ENCODE measurements at regions of chr1 and their contacts with region 1.

Region 1: DNA sequence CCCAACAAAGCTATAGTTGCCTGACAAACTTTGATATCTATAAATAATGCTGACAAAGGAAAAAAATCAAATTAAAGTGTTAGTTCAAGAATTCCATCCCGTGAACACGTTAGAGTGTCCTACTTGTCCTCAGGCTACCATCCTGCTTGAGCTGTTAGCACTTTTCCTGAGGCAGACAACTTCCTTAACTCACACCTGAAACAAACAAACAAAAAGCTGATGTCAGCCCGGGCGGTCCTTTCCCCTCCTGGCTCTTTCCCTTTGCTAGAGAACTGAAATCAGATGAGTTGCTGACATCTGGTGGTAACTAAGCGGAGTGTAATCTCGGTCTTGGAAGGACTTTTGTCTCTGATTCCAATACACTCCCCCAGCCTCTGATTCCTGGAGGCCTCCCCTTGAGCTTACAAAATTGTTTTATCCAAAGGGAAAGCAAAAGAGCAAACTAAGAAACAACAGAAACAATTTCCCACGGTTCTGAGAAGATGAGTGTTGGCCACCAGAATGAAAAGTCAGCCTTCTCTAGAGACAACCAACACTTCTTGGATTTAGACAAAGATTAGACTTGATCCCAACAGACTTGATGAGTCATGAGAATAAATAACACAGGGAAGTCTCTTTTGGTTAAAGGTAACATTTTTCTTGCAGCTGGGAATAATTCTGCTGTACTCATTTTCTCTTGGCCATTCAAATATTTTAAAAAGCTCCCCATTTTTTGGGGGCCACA is 135.4 kb downstream of the PROX1 start:
- DNase-seq: peak; percentile 54
- H3K4me3 ChIP-seq: no peak overlapping the region
- H3K27ac ChIP-seq: no peak overlapping the region
- H3K4me1 ChIP-seq: no peaks in the 10 kb centered on the region
- H3K27me3 ChIP-seq: no peaks in the 10 kb centered on the region
- CTCF ChIP-seq: peak; percentile 56

Region 2: GRCh38 chr1:213135572-213135971 is 987.7 kb before region 1 on chr1:
- intact Hi-C with region 1: loop called (anchors 10 kb)
- DNase-seq: no peak
- H3K4me3 ChIP-seq: no peak overlapping the region
- H3K27ac ChIP-seq: peak overlapping the region; percentile 41
- H3K4me1 ChIP-seq: no peaks in the 10 kb centered on the region
- H3K27me3 ChIP-seq: no peaks in the 10 kb centered on the region
- CTCF ChIP-seq: no peak

Region 3: DNA sequence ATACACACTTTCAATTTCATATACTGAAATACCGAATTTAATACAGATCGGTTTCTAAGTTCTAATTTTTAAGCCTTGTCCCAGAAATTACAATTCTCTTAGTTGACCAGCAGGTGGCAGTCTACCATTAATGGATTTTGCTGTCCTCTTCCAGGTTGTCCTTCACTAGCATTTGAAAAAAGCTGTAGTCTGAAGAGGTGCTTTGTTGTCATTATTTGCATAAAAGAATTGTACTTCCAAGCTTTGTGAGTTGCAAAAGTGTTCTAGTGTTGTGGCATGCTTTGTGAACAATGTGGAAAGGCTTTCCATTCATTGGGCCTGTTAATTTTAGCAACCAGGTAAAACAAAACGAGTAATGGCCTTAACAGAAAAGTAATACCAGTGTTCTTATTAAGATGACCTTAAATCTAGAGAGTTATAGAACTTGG is 878.5 kb before region 1 on chr1:
- intact Hi-C with region 1: loop called (anchors 5 kb)
- DNase-seq: peak; percentile 22
- H3K4me3 ChIP-seq: no peak overlapping the region
- H3K27ac ChIP-seq: no peak overlapping the region
- H3K4me1 ChIP-seq: no peaks in the 10 kb centered on the region
- H3K27me3 ChIP-seq: no peaks in the 10 kb centered on the region
- CTCF ChIP-seq: peak; percentile 65

Region 4: GRCh38 chr1:213374369-213374768 is 748.9 kb before region 1 on chr1:
- intact Hi-C with region 1: loop called (anchors 2 kb)
- DNase-seq: peak; percentile 71
- H3K4me3 ChIP-seq: no peak overlapping the region
- H3K27ac ChIP-seq: no peak overlapping the region
- H3K4me1 ChIP-seq: no peaks in the 10 kb centered on the region
- H3K27me3 ChIP-seq: no peaks in the 10 kb centered on the region
- CTCF ChIP-seq: peak; percentile 84

Region 5: DNA sequence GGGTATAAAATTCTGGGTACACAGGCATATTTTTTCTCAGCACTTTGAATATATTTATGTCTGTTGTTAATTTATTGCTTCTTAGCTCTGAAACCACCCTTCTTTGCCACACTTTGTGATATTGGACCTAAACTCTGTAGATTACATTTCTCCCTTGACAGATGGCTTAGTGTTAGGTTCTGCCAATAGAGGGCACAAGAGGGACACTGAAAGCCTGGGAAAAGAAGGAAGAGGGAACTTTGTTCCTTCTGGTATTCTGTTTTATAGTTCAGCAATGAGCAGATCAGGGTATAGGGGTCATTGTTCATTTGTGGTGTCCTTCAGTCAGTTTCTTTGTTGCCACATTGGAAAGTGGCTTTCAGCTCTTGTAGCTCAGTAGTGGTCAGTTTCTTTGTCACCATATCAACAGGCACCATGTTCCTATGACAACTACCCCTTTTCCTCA is 559.0 kb before region 1 on chr1:
- intact Hi-C with region 1: loop called (anchors 5 kb)
- DNase-seq: peak; percentile 56
- H3K4me3 ChIP-seq: no peak overlapping the region
- H3K27ac ChIP-seq: no peak overlapping the region
- H3K4me1 ChIP-seq: no peaks in the 10 kb centered on the region
- H3K27me3 ChIP-seq: no peaks in the 10 kb centered on the region
- CTCF ChIP-seq: peak; percentile 46

Region 6: DNA sequence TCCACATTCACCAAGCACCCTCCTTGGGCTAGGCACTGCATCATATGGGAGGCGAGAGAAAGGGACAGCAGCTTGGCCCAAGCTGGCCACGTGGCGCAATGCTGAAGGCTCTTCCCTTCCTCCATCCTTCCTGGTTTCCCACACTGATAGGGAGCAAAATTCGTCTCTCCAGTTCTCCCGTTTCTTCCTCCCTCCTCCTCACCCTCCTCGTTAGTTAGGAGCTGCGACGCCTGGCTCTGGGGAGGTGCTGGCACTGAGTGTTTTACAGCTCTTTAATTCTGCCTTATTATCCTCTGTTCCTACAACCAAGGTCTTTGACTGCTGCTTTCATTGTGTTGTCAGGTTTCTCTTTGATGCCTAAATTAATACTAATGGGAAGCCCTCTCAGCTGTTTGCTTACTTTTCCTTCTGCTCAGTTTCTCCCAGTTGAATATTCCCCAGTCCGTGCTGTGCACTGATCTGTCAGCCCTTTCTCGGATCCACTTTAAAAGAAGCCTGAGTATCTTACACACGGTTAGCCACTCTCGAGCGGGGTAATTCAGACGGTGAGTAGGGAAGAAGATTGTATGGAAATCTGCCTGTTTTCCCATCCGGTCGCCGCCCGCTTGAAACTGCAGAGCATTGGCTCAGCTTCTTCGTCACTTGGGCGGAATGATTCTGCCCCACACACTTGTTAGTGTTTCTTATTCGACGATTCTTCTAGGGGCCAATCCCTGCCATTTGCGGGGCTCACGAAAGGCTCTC is 101.6 kb after region 1 on chr1:
- intact Hi-C with region 1: no loop called
- DNase-seq: no peak
- H3K4me3 ChIP-seq: peak overlapping the region; percentile 7
- H3K27ac ChIP-seq: no peak overlapping the region
- H3K4me1 ChIP-seq: no peaks in the 10 kb centered on the region
- H3K27me3 ChIP-seq: no peaks in the 10 kb centered on the region
- CTCF ChIP-seq: no peak

Region 7: DNA sequence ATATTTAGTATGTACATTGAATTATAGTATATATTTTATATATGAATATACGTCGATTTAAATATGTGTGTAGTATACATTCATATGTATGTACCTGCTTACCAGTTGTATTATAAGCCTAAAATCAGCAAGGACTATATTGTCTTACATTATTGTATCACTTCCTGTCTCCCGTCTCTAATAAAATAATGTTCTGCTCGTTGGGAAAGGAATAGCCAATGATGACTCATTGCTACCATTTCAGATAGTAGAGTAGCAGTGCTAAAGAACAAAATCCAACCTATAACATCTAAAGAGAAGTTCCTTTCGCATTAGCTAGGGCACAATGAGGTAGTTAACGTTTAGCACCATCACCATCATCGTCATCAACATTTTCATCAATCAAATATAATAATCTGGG is 117.8 kb after region 1 on chr1:
- intact Hi-C with region 1: no loop called
- DNase-seq: no peak
- H3K4me3 ChIP-seq: no peak overlapping the region
- H3K27ac ChIP-seq: no peak overlapping the region
- H3K4me1 ChIP-seq: no peaks in the 10 kb centered on the region
- H3K27me3 ChIP-seq: no peaks in the 10 kb centered on the region
- CTCF ChIP-seq: no peak

Measured in colonic mucosa (tissue), 4 donors.